IMR-90 (cell line): ENCODE measurements at regions of chr3 and their contacts with region 1.

Region 1: DNA sequence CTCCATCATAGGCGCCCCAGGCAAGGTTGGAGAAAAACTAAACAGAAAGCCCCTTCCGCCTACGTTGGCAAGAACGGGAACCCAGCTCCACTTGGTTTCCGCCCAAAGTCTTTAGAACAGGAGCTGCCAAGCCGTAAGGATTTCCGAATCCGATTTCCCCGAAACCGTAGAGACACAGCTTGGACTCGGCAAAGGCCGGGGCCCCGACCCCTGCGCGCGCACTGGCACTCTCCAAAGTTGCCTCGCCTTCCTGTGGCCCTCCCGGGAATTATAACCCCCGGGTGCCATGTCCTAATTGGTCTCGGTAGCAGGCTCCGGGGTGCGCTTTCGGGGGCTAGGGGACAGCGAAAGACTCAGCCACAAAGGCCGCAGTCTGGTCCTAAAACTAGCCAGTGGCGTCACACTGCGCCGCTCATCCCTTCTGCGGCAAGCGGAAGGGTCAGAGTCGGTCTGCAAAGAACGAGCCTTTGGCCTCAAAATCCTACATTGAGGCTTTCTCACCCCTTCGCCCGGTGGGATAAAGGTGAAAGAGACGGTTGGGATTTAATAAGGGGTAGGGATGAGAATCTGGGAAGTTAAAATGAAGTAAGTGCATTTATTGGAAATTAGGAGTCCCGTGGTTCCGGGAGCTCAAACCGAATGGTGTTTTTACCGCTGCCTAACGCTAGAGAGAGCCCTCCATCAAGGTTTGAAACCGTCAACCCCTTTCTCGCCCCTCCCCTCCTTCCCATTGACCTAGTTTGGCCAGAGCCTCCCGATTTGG is 6.8 kb downstream of the BCL6 start:
- DNase-seq: peak; percentile 93
- ATAC-seq: peak; percentile 63
- H3K4me3 ChIP-seq: peak overlapping the region; percentile 46
- H3K27ac ChIP-seq: peak overlapping the region; percentile 87
- H3K4me1 ChIP-seq: peaks cover 20% of the 10 kb centered on the region
- H3K27me3 ChIP-seq: no peaks in the 10 kb centered on the region
- CTCF ChIP-seq: peak; percentile 77
- POLR2A ChIP-seq: peak; percentile 48; the same call in 1 of the 2 replicates
- RAD21 ChIP-seq: peak; percentile 91

Region 2: DNA sequence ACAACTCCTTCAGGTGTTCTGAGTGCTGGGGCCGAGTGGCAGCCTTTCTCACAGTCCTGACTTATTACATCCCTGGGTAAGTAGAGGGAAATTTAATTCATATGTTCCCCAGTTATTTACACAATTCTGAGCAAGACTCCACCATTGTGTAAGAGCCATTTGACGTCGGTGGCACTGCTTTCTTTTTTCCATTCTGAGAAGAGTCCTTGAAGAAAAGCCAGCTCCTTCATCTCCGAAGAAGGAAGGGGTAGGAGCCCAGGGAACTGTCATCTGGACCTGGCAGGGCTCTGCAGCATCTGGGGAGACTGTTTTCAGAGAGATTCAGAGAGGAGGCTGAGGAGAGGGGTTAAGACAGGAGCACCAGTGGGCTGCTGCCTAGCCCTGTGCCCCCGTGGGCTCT is 424.3 kb before region 1 on chr3:
- CTCF ChIA-PET with region 1: no interaction called
- POLR2A ChIA-PET with region 1: no interaction called
- dilution Hi-C with region 1: no loop called
- in situ Hi-C with region 1: no loop called
- intact Hi-C with region 1: no loop called
- DNase-seq: no peak
- ATAC-seq: no peak
- H3K4me3 ChIP-seq: no peak overlapping the region
- H3K27ac ChIP-seq: no peak overlapping the region
- H3K4me1 ChIP-seq: peaks cover 5% of the 10 kb centered on the region
- H3K27me3 ChIP-seq: peaks cover 14% of the 10 kb centered on the region
- CTCF ChIP-seq: no peak
- POLR2A ChIP-seq: no peak
- RAD21 ChIP-seq: no peak

Region 3: DNA sequence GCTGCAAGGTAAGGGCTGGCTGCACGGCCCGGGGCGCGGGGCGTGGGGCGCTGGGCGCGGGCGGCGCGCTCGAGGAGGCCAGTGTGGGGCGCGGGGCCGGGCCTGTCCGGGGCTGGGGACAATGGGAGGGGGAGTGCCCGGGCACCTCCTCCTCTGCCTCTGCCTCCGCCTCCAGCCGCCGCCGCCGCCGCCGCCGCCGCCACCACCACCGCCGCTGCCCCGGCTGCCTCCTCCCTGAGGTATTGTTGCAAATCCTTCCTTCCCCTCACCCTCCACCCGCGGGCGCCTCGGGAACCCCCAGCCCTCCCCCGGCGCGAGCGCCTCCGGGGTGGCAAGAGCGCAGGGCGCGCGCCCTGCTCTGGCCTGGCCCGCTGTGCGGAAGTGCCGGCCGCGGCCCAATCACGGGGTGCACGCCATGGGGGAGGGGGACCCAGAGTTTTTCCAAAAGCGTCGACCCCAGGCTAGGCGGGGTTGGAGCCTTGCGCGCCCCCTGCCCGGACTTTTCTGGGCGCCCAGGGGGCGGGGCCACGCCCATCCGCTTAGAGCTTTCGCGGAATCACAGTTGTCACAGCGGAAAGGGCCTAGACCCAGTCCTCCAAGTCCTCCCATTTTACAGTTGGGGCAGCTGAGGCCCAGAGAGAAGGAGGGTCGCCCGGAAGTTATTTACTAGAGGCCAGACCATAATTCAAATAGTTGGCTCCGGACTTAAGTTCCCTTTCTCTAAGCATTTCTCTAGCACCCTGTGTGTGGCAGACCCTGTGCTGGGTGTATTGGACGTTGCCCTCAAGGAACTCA is 415.7 kb after region 1 on chr3 and contains the start of gene LPP:
- CTCF ChIA-PET with region 1: interaction called, 4 read pairs
- POLR2A ChIA-PET with region 1: interaction called, 12 read pairs
- dilution Hi-C with region 1: no loop called
- in situ Hi-C with region 1: no loop called
- intact Hi-C with region 1: loop called (anchors 1 kb)
- DNase-seq: peak; percentile 77
- ATAC-seq: peak; percentile 86
- H3K4me3 ChIP-seq: peak within 1 kb of the TSS; percentile 83
- H3K27ac ChIP-seq: peak within 1 kb of the TSS; percentile 97
- H3K4me1 ChIP-seq: peaks cover 30% of the 10 kb centered on the region
- H3K27me3 ChIP-seq: no peaks in the 10 kb centered on the region
- CTCF ChIP-seq: 0 out of 2 replicates have a peak, but pooled peaks have one; percentile 4
- POLR2A ChIP-seq: no peak; the same call in 1 of the 2 replicates
- RAD21 ChIP-seq: peak; percentile 24; the same call in 1 of the 2 replicates
- total RNA-seq, gene LPP: 111 and 130 TPM in 2 replicates

Region 4: GRCh38 chr3:188489639-188490405 is 751.3 kb after region 1 on chr3:
- CTCF ChIA-PET with region 1: interaction called, 4 read pairs
- POLR2A ChIA-PET with region 1: no interaction called
- dilution Hi-C with region 1: no loop called
- in situ Hi-C with region 1: no loop called
- intact Hi-C with region 1: loop called (anchors 5 kb)
- DNase-seq: peak; percentile 90
- ATAC-seq: peak; percentile 93
- H3K4me3 ChIP-seq: no peak overlapping the region
- H3K27ac ChIP-seq: no peak overlapping the region
- H3K4me1 ChIP-seq: peaks cover 16% of the 10 kb centered on the region
- H3K27me3 ChIP-seq: no peaks in the 10 kb centered on the region
- CTCF ChIP-seq: no peak
- POLR2A ChIP-seq: no peak
- RAD21 ChIP-seq: 0 out of 2 replicates have a peak, but pooled peaks have one; percentile 1

Region 5: GRCh38 chr3:188712248-188712924 is 973.9 kb after region 1 on chr3:
- CTCF ChIA-PET with region 1: no interaction called
- POLR2A ChIA-PET with region 1: no interaction called
- dilution Hi-C with region 1: no loop called
- in situ Hi-C with region 1: no loop called
- intact Hi-C with region 1: loop called (anchors 2 kb)
- DNase-seq: peak; percentile 92
- ATAC-seq: peak; percentile 88
- H3K4me3 ChIP-seq: no peak overlapping the region
- H3K27ac ChIP-seq: peak overlapping the region; percentile 79
- H3K4me1 ChIP-seq: peaks cover 8% of the 10 kb centered on the region
- H3K27me3 ChIP-seq: no peaks in the 10 kb centered on the region
- CTCF ChIP-seq: no peak
- POLR2A ChIP-seq: no peak
- RAD21 ChIP-seq: 0 out of 2 replicates have a peak, but pooled peaks have one; percentile 6

Region 6: DNA sequence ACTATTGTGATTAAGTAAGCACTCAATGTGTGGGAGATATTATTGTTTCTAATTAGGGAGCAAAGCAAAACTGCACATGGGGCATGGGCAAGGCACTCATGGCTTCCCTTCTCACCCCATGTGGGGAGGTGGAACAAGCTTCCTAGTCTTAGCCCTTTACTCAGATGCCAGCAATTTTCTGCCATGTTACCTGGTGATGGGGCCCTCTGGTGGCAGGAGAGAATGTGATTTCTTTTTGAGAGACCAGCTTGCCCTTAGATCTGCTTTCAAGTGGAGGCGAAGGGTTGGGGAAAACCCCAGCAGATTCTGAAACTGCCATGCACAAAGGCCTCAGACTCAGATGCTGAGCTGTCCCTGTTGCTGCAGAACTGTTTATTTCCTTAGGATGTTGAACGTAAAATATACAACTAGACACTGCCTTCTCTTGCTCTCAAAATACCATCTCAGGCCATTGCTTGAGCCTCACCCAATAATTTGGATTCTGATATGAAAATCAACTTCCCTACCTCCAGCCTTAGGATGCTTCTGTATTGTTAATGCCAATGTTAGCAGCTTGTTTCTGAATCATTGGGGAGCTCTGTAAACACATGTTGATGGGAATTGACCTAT is 1303.1 kb after region 1 on chr3:
- CTCF ChIA-PET with region 1: no interaction called
- POLR2A ChIA-PET with region 1: no interaction called
- dilution Hi-C with region 1: no loop called
- in situ Hi-C with region 1: no loop called
- intact Hi-C with region 1: loop called (anchors 5 kb)
- DNase-seq: peak; percentile 45
- ATAC-seq: peak; percentile 42; the same call in 1 of the 2 replicates
- H3K4me3 ChIP-seq: no peak overlapping the region
- H3K27ac ChIP-seq: no peak overlapping the region
- H3K4me1 ChIP-seq: no peaks in the 10 kb centered on the region
- H3K27me3 ChIP-seq: no peaks in the 10 kb centered on the region; the same call in 1 of the 2 replicates
- CTCF ChIP-seq: peak; percentile 42
- POLR2A ChIP-seq: no peak
- RAD21 ChIP-seq: peak; percentile 34